Endothelial cell of umbilical vein (primary cell): ENCODE measurements at regions of chr16 and their contacts with region 1.

Region 1: DNA sequence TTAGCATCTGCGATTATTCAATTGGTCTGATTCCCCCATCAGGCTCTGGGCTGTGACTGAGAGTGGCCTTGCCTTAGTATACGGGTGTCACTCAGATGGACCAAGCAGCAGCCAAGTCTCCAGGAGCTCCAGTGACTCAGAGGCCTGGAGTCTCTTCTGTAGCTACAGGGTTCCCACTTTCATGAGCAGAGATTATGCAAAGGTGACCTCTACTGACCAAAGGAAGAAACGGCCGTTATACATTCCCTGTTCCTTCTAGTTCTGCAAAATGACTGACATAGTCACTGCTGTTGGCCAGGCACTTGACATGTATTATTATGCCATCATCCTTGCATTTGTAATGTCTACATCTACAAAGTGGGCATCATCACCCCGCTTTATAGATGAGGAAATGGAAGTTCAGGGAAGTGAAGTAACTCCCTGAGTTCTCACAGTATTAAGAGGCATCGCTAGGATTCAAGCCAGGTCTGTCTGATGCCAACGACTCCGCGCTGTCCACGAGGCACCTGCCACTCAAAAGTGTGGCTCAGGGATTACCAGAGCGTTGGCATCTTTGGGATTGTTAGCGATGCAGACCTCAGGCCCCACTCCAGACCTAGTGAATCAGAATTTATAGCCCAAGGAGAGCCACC is 23.3 kb downstream of the SLC38A7 start:
- DNase-seq: peak; percentile 81
- H3K4me3 ChIP-seq: no peak overlapping the region
- H3K27ac ChIP-seq: no peak overlapping the region
- H3K4me1 ChIP-seq: no peaks in the 10 kb centered on the region
- H3K27me3 ChIP-seq: no peaks in the 10 kb centered on the region
- CTCF ChIP-seq: peak; percentile 55 to 65
- POLR2A ChIP-seq: no peak

Region 2: GRCh38 chr16:58299757-58300349 is 361.5 kb before region 1 on chr16:
- CTCF ChIA-PET with region 1: interaction called, 23 read pairs
- POLR2A ChIA-PET with region 1: no interaction called
- dilution Hi-C with region 1: no loop called
- intact Hi-C with region 1: loop called (anchors 5 kb)
- DNase-seq: peak; percentile 36
- H3K4me3 ChIP-seq: no peak overlapping the region
- H3K27ac ChIP-seq: no peak overlapping the region
- H3K4me1 ChIP-seq: no peaks in the 10 kb centered on the region
- H3K27me3 ChIP-seq: peaks cover 0 to under 1% of the 10 kb centered on the region in 2 experiments
- CTCF ChIP-seq: peak; percentile 82 to 87
- POLR2A ChIP-seq: no peak

Region 3: DNA sequence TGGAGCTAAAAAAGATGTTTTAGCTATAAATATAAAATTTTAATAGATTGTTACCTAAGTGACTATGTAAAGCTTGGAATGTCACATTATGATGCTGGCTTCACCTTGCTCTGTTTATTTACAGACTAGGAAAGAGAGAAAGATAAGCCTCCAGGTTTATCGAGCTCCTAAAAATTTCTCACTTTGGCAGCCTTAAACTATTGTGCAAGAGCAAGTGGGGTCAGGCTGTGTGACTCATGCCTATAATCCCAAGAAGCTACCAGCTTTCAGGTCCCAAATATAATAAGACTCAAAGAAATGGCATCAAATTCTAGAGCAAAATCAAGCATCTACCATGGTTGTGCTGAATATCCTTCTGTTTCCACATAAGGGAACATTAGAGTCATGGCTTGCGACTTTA is 332.2 kb before region 1 on chr16:
- CTCF ChIA-PET with region 1: no interaction called
- POLR2A ChIA-PET with region 1: no interaction called
- dilution Hi-C with region 1: no loop called
- intact Hi-C with region 1: no loop called
- DNase-seq: no peak
- H3K4me3 ChIP-seq: no peak overlapping the region
- H3K27ac ChIP-seq: no peak overlapping the region
- H3K4me1 ChIP-seq: no peaks in the 10 kb centered on the region
- H3K27me3 ChIP-seq: peaks cover 6% of the 10 kb centered on the region in 2 experiments
- CTCF ChIP-seq: no peak
- POLR2A ChIP-seq: no peak

Region 4: GRCh38 chr16:58459344-58460218 is 201.7 kb before region 1 on chr16:
- CTCF ChIA-PET with region 1: no interaction called
- POLR2A ChIA-PET with region 1: no interaction called
- dilution Hi-C with region 1: no loop called
- intact Hi-C with region 1: no loop called
- DNase-seq: peak; percentile 87
- H3K4me3 ChIP-seq: no peak overlapping the region
- H3K27ac ChIP-seq: no peak overlapping the region
- H3K4me1 ChIP-seq: peaks cover 32% of the 10 kb centered on the region
- H3K27me3 ChIP-seq: peaks cover 0 to 4% of the 10 kb centered on the region in 2 experiments
- CTCF ChIP-seq: no peak
- POLR2A ChIP-seq: no peak

Region 5: DNA sequence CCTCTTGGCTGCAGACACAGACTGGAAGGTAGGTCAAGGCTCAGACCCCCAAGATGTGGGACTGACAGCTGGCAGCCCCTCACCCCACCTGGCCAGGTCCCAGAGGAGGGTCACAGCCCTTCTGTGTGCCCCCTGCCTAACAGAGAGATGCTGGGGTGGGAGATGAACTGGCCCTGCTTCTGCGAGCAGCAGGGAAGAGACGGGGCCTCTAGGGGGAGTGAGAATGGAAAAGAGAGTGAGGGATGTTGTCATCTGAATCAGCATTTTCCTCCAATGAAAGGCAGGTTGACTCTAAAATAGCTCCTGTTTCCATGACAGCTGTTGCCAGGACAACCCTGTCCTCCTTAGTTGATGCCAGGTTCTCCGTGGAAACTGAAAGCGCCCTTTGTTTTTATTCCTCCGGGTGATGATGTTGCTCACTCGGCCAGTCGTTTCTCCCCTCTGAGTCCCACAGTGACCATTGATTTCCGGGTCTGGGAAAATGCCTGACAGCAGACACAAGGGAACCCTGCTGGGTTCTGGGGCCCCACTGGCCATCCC is 166.3 kb before region 1 on chr16:
- CTCF ChIA-PET with region 1: interaction called, 17 read pairs
- POLR2A ChIA-PET with region 1: no interaction called
- dilution Hi-C with region 1: no loop called
- intact Hi-C with region 1: loop called (anchors 1 kb)
- DNase-seq: peak; percentile 88
- H3K4me3 ChIP-seq: no peak overlapping the region
- H3K27ac ChIP-seq: peak overlapping the region; percentile 19
- H3K4me1 ChIP-seq: no peaks in the 10 kb centered on the region
- H3K27me3 ChIP-seq: no peaks in the 10 kb centered on the region
- CTCF ChIP-seq: peak; percentile 51 to 61
- POLR2A ChIP-seq: no peak

Region 6: GRCh38 chr16:58515125-58515870 is 146.0 kb before region 1 on chr16 and contains the start of gene SETD6:
- CTCF ChIA-PET with region 1: interaction called, 49 read pairs
- POLR2A ChIA-PET with region 1: no interaction called
- dilution Hi-C with region 1: no loop called
- intact Hi-C with region 1: loop called (anchors 1 kb)
- DNase-seq: peak; percentile 90
- H3K4me3 ChIP-seq: peak within 1 kb of the TSS; percentile 32 to 70 (median 63)
- H3K27ac ChIP-seq: peak within 1 kb of the TSS; percentile 50
- H3K4me1 ChIP-seq: peaks cover 12% of the 10 kb centered on the region
- H3K27me3 ChIP-seq: no peaks in the 10 kb centered on the region
- CTCF ChIP-seq: peak in 1 of 2 donors; percentile 23
- POLR2A ChIP-seq: peak; percentile 80
- total RNA-seq, gene SETD6: 10.4 and 16.4 TPM in 2 replicates

Region 7: GRCh38 chr16:58684354-58685083 is 23.2 kb after region 1 on chr16 and contains the start of gene SLC38A7:
- CTCF ChIA-PET with region 1: interaction called, 14 read pairs
- POLR2A ChIA-PET with region 1: no interaction called
- dilution Hi-C with region 1: no loop called
- intact Hi-C with region 1: no loop called
- DNase-seq: peak; percentile 86
- H3K4me3 ChIP-seq: peak within 1 kb of the TSS; percentile 62 to 95 (median 76)
- H3K27ac ChIP-seq: peak within 1 kb of the TSS; percentile 58
- H3K4me1 ChIP-seq: peaks cover 10% of the 10 kb centered on the region
- H3K27me3 ChIP-seq: no peaks in the 10 kb centered on the region
- CTCF ChIP-seq: no peak
- POLR2A ChIP-seq: peak; percentile 75
- total RNA-seq, gene SLC38A7: 44.4 and 45.5 TPM in 2 replicates

Region 8: DNA sequence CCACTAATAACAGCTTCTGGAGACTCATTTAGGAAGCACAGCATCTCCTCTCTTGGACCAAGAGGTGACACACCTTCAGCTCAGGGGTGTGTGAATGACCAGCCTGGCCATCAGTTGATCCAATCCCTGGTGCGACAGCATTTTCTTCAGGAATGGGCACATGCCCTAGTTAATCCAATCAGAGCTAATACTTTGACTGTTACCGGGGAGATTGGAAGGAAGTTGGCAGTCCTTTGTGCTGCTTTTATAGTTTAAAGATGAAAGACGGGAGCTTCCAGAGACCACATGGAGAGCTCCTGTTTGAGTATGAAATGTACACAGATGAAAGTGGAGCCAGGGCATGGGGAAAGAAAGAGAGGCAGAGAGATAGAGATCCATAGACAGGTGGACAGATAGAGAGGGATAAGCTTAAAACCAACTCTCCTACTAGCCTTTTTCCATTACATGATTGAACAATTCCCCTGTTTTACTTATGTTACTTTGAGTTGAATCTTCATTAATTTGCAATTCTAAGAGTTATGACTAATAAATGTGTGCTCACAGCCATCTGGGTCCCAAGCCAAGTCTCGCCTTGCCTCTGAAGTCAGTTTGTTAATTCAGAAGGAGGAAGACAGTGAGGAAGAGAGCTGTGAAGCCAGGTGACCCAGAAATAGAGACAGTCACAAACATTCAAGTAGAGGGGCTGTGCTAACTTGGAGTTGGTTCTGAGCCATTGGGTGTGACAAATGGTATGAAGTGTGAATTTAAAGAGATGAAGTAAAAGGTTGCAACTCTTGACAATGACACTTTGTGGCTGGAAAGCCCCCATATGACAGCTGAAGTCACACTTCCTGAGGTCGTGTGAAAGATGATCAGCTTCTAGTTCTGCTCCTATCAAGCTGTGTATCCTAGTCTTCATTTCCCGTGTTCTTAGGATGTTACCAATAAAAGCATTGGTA is 192.8 kb after region 1 on chr16:
- CTCF ChIA-PET with region 1: no interaction called
- POLR2A ChIA-PET with region 1: no interaction called
- dilution Hi-C with region 1: no loop called
- intact Hi-C with region 1: no loop called
- DNase-seq: no peak
- H3K4me3 ChIP-seq: no peak overlapping the region
- H3K27ac ChIP-seq: no peak overlapping the region
- H3K4me1 ChIP-seq: no peaks in the 10 kb centered on the region
- H3K27me3 ChIP-seq: no peaks in the 10 kb centered on the region
- CTCF ChIP-seq: no peak
- POLR2A ChIP-seq: no peak